Endothelial cell of umbilical vein (primary cell): ENCODE measurements at regions of chr15 and their contacts with region 1.

Region 1: GRCh38 chr15:33700695-33701304 is 267.5 kb upstream of the CHRM5 start:
- DNase-seq: peak; percentile 85
- H3K4me3 ChIP-seq: no peak overlapping the region
- H3K27ac ChIP-seq: no peak overlapping the region
- H3K4me1 ChIP-seq: no peaks in the 10 kb centered on the region
- H3K27me3 ChIP-seq: peaks cover 0 to 3% of the 10 kb centered on the region in 2 experiments
- CTCF ChIP-seq: peak; percentile 96 to 97
- POLR2A ChIP-seq: no peak

Region 2: GRCh38 chr15:33215941-33216872 is 484.6 kb before region 1 on chr15:
- CTCF ChIA-PET with region 1: interaction called, 15 read pairs
- POLR2A ChIA-PET with region 1: no interaction called
- dilution Hi-C with region 1: no loop called
- intact Hi-C with region 1: no loop called
- DNase-seq: peak; percentile 31
- H3K4me3 ChIP-seq: no peak overlapping the region
- H3K27ac ChIP-seq: no peak overlapping the region
- H3K4me1 ChIP-seq: no peaks in the 10 kb centered on the region
- H3K27me3 ChIP-seq: no peaks in the 10 kb centered on the region
- CTCF ChIP-seq: peak; percentile 20 to 51
- POLR2A ChIP-seq: no peak

Region 3: DNA sequence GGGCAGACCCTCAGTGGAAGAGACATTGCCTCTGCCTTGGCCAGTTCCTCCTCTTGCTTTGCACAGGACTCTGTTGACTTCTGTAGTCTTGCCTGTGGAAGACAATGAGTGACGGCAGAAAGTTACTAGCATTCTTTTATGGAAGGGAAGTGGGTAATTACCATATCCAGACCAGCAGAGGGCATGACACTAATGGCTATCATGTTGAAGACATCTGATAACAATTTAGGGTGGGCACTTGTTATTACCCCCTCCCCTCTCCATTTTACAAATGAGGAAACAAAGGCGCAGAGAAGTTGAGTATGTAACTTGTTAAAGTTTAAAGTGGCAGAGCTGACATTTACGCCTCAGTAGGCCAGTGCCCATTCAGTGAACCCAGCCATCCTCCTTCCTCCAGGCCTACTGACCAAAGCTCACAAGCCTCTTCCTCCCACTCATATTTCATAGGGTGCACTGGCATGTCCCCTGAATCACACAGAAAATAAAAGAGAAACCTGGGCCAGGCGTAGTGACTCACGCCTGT is 458.1 kb before region 1 on chr15:
- CTCF ChIA-PET with region 1: interaction called, 51 read pairs
- POLR2A ChIA-PET with region 1: no interaction called
- dilution Hi-C with region 1: no loop called
- intact Hi-C with region 1: no loop called
- DNase-seq: peak; percentile 14
- H3K4me3 ChIP-seq: no peak overlapping the region
- H3K27ac ChIP-seq: no peak overlapping the region
- H3K4me1 ChIP-seq: no peaks in the 10 kb centered on the region
- H3K27me3 ChIP-seq: peaks cover 0 to 2% of the 10 kb centered on the region in 2 experiments
- CTCF ChIP-seq: peak; percentile 7 to 34
- POLR2A ChIP-seq: no peak

Region 4: GRCh38 chr15:33298631-33299030 is 402.2 kb before region 1 on chr15:
- CTCF ChIA-PET with region 1: interaction called, 223 read pairs
- POLR2A ChIA-PET with region 1: no interaction called
- dilution Hi-C with region 1: no loop called
- intact Hi-C with region 1: no loop called
- DNase-seq: no peak
- H3K4me3 ChIP-seq: no peak overlapping the region
- H3K27ac ChIP-seq: no peak overlapping the region
- H3K4me1 ChIP-seq: peaks cover 3% of the 10 kb centered on the region
- H3K27me3 ChIP-seq: peaks cover 7 to 8% of the 10 kb centered on the region in 2 experiments
- CTCF ChIP-seq: no peak
- POLR2A ChIP-seq: no peak

Region 5: GRCh38 chr15:33716025-33716424 is 15.2 kb after region 1 on chr15:
- CTCF ChIA-PET with region 1: interaction called, 97 read pairs
- POLR2A ChIA-PET with region 1: no interaction called
- dilution Hi-C with region 1: no loop called
- intact Hi-C with region 1: no loop called
- DNase-seq: no peak
- H3K4me3 ChIP-seq: no peak overlapping the region
- H3K27ac ChIP-seq: no peak overlapping the region
- H3K4me1 ChIP-seq: peaks cover 8% of the 10 kb centered on the region
- H3K27me3 ChIP-seq: no peaks in the 10 kb centered on the region
- CTCF ChIP-seq: no peak
- POLR2A ChIP-seq: no peak

Region 6: GRCh38 chr15:33737687-33738601 is 37.1 kb after region 1 on chr15:
- CTCF ChIA-PET with region 1: interaction called, 170 read pairs
- POLR2A ChIA-PET with region 1: no interaction called
- dilution Hi-C with region 1: no loop called
- intact Hi-C with region 1: loop called (anchors 1 kb)
- DNase-seq: peak; percentile 49
- H3K4me3 ChIP-seq: no peak overlapping the region
- H3K27ac ChIP-seq: no peak overlapping the region
- H3K4me1 ChIP-seq: no peaks in the 10 kb centered on the region
- H3K27me3 ChIP-seq: no peaks in the 10 kb centered on the region
- CTCF ChIP-seq: peak; percentile 80
- POLR2A ChIP-seq: no peak

Region 7: DNA sequence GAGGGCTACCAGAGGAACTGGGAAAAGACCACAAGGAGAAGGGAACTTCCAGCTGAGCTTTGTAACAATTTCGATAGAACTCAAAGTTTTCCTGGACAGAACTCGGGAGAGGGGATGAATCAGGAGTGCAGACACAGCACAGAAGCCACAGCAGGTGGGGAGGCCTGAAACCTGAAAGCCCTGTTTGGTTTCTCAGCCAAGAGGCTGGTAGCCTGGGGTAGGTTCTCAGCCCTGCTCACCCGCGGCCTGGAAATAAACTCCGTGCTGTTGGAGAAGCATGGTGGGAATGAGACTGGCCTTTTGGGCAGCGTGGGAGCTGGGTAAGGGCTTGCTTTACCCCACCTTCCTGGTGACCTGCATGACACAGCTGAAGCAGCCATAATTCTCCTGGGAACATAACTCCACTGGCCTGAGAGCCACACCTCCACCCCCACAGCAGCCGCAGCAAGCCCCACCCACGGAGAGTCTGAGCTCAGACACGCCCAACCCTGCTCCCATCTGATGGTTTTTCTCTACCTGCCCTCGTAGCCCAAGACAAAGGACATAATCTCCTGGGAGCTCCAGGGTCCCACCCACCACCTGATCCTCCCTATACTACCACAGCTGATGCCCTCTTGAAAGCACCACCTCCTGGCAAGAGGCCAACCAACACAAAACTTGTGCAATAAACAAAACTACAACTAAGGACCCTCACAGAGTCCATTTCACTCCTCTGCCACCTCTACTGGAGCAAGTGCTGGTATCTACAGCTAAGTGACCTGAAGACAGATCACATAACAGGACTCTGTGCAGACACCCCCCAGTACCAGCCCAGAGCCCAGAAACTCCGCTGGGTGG is 215.0 kb after region 1 on chr15:
- CTCF ChIA-PET with region 1: no interaction called
- POLR2A ChIA-PET with region 1: no interaction called
- dilution Hi-C with region 1: no loop called
- intact Hi-C with region 1: no loop called
- DNase-seq: no peak
- H3K4me3 ChIP-seq: no peak overlapping the region
- H3K27ac ChIP-seq: no peak overlapping the region
- H3K4me1 ChIP-seq: peaks cover 10% of the 10 kb centered on the region
- H3K27me3 ChIP-seq: no peaks in the 10 kb centered on the region
- CTCF ChIP-seq: no peak
- POLR2A ChIP-seq: no peak